Heart left ventricle (tissue), 16 donors: ENCODE measurements at regions of chr7 and their contacts with region 1.

Region 1: DNA sequence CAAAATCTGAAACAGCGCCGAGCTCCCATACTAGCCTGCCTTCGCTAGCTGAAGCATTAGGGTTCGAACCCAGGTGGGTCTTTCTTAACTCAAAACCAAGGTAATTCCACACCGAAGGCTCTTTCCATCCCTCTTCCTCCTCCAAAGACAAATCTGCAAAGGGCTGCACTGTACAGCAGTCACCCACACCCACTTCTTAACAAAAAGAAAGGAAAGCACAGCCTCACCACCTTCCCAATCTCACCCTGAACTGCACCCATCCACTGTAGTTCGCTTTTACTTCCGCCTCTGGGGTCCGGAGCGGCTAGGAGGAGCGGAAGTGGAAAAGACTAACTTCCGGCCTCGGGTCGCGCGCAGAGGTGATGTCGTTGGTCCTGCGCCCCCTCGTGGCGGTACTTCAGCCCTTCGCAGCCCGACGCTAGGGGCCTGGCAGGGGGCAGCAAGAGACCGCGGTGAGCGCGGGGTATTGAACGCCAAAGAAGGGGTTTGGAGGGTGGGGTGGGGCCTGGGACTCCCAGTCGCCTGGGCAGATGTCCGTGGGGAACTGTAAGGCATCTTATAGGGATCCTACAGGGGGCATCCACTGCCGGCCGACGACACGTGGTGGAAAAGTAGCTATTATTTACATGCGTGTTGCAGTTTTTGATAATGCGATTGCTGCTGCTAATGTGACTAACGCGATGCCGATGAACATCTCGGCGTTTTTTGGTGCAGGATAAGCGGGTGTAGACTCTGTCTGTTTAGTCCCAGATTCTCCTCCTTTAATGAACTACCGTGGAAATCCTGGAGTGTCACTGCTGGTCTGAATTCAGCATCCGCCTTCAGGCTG is at the start of gene MTERF1:
- DNase-seq: peak; percentile 93 to 95 (median 94)
- ATAC-seq: peak; percentile 94 to 100 (median 100)
- H3K4me3 ChIP-seq: peak within 1 kb of the TSS; percentile 66 to 98 (median 78)
- H3K27ac ChIP-seq: peak within 1 kb of the TSS in 7 of 12 donors; percentile 8 to 70 (median 60)
- H3K4me1 ChIP-seq: peaks cover 0 to 25% (median 11%) of the 10 kb centered on the region in 12 donors
- H3K27me3 ChIP-seq: no peaks in the 10 kb centered on the region
- CTCF ChIP-seq: peak; percentile 85 to 100 (median 96)
- POLR2A ChIP-seq: peak in 1 of 2 donors; percentile 24
- total RNA-seq, gene MTERF1: 5.5 to 11.6 (median 7.3) TPM

Region 2: DNA sequence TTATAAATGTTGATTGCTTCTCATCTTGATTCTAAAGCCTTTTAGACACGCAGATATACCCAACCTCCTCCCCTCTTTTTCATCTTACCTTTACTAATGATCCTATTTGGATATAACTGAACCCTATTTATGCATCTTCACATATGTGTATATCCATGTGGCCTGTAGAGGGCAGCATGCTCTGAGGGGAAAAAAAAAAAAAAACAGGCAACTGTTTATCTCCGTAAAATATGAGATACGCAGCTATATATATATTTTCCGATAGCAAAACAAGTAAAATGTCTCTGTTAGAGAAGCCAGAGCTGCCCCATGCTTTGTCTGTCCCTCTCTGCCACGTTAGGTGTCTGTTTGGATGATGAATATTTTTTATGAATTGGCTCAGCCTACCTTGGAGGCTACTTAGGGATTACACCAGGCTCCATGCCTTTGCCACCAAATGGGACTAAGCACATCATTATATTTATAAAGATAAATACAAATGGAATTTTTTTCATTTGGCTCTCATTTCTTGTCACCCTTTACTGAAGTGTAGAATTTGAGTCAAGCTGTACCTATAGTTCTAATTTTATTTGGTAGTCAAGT is 791.2 kb before region 1 on chr7:
- intact Hi-C with region 1: loop called in 7 of 10 experiments (anchors 5 to 10 kb)
- DNase-seq: no peak
- ATAC-seq: peak; percentile 33 to 66 (median 61)
- H3K4me3 ChIP-seq: peak overlapping the region in 9 of 12 donors; percentile 15 to 42 (median 33)
- H3K27ac ChIP-seq: peak overlapping the region in 7 of 12 donors; percentile 0 to 47 (median 36)
- H3K4me1 ChIP-seq: peaks cover 0 to 22% (median 7%) of the 10 kb centered on the region in 12 donors
- H3K27me3 ChIP-seq: no peaks in the 10 kb centered on the region
- CTCF ChIP-seq: peak; percentile 62 to 91 (median 77)
- POLR2A ChIP-seq: no peak

Region 3: GRCh38 chr7:91826377-91826776 is 54.2 kb before region 1 on chr7:
- intact Hi-C with region 1: loop called in 1 of 10 experiments (anchors 5 kb)
- DNase-seq: no peak
- ATAC-seq: no peak
- H3K4me3 ChIP-seq: no peak overlapping the region
- H3K27ac ChIP-seq: no peak overlapping the region
- H3K4me1 ChIP-seq: peaks cover 0 to 5% (median 0%) of the 10 kb centered on the region in 12 donors
- H3K27me3 ChIP-seq: no peaks in the 10 kb centered on the region
- CTCF ChIP-seq: no peak
- POLR2A ChIP-seq: no peak

Region 4: DNA sequence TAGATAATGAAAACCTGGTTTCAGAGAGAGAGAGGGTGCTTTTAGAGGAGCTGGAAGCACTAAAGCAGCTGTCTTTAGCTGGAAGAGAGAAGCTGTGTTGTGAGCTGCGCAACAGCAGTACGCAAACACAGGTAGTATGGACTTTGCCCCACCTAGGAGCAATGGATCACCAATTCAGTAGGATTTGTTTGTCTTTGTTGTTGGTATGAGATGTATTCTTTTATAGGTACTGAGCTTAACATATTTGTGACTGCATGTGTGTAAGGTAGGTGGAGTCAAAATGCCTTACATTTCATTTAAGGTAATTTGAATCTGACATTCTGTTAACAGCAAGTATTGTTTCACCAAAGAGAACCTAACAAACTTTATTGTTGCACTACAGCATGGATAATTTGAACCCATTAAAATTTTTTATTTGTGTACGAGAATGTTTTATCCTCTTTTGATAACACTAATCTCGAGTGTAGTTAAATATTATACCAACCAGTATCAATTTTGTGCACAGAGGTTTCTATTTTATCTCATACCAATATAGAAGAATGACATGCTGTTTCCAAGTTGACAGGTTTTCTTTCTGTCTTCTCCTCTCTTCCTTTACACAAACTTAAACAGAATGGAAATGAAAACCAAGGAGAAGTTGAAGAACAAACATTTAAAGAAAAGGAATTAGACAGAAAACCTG is 161.6 kb after region 1 on chr7:
- intact Hi-C with region 1: loop called in 1 of 10 experiments (anchors 10 kb)
- DNase-seq: no peak
- ATAC-seq: peak in 3 of 4 donors; percentile 16 to 33 (median 22)
- H3K4me3 ChIP-seq: no peak overlapping the region
- H3K27ac ChIP-seq: peak overlapping the region in 11 of 12 donors; percentile 10 to 90 (median 70)
- H3K4me1 ChIP-seq: peaks cover 0 to 13% (median 0%) of the 10 kb centered on the region in 12 donors
- H3K27me3 ChIP-seq: no peaks in the 10 kb centered on the region
- CTCF ChIP-seq: no peak
- POLR2A ChIP-seq: no peak